Heart left ventricle (tissue), 16 donors: ENCODE measurements at regions of chr20 and their contacts with region 1.

Region 1: DNA sequence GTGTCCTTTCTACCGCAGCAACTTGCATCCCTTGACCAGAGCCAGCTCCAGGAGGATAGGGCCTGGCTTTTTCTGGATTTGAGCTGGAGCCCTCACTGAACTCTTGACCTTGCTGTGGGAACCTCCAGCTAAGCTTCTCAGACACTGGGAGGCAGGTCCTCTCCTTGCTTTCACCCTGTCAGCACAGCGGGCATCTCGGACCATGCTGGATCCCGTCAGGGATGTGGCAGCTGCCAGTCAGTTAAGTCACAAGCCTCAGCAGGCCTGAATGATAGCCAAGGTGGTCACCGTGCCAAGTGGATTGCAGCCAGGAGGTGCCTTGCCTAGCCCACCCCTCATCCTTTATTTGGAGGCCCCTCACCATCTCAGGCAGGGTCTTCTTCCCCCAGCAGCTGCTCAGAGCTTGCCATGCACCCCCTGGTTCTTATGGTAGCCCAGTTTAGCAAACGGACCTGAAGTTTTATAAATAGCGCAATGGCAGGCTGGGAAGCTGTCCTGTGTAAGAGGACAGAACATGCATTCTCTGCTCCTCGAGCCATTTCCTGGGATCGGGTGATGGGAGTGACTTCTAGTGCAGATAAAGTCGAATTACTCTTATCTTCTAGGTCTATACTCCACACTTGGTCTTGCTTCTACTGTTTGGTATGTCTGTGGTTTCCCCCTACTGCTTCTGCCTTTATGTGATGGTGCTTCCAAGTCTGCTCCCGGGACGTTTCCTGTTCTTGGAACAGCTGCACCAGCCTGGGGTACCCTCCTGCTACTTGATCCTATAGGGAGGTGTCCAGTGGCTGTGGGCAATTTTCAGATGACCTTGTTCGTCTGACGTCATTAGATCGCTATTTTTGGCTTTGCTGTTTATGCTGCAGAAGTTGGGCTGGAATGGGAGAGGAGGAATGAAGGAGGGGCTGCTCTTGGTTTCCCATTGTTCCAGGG is 7.1 kb upstream of the MYLK2 start:
- DNase-seq: peak in 2 of 5 donors; percentile 47 to 55
- ATAC-seq: peak; percentile 66 to 73 (median 70)
- H3K4me3 ChIP-seq: peak overlapping the region in 2 of 12 donors; percentile 2 to 4
- H3K27ac ChIP-seq: peak overlapping the region; percentile 57 to 82 (median 71)
- H3K4me1 ChIP-seq: peaks cover 0 to 45% (median 28%) of the 10 kb centered on the region in 12 donors
- H3K27me3 ChIP-seq: no peaks in the 10 kb centered on the region
- CTCF ChIP-seq: no peak
- POLR2A ChIP-seq: no peak

Region 2: GRCh38 chr20:31661625-31662371 is 150.3 kb before region 1 on chr20:
- intact Hi-C with region 1: loop called in 1 of 10 experiments (anchors 10 kb)
- DNase-seq: peak; percentile 86 to 90 (median 87)
- ATAC-seq: peak; percentile 57 to 89 (median 85)
- H3K4me3 ChIP-seq: peak overlapping the region in 11 of 12 donors; percentile 2 to 60 (median 42)
- H3K27ac ChIP-seq: peak overlapping the region; percentile 43 to 84 (median 78)
- H3K4me1 ChIP-seq: peaks cover 18 to 53% (median 44%) of the 10 kb centered on the region in 12 donors
- H3K27me3 ChIP-seq: no peaks in the 10 kb centered on the region
- CTCF ChIP-seq: peak; percentile 74 to 93 (median 86)
- POLR2A ChIP-seq: peak in 1 of 2 donors; percentile 78

Region 3: GRCh38 chr20:32152421-32153155 is 340.5 kb after region 1 on chr20:
- intact Hi-C with region 1: no loop called
- DNase-seq: no peak
- ATAC-seq: no peak
- H3K4me3 ChIP-seq: no peak overlapping the region
- H3K27ac ChIP-seq: no peak overlapping the region
- H3K4me1 ChIP-seq: peaks cover 3 to 24% (median 14%) of the 10 kb centered on the region in 12 donors
- H3K27me3 ChIP-seq: no peaks in the 10 kb centered on the region
- CTCF ChIP-seq: no peak
- POLR2A ChIP-seq: no peak